Prostate gland (tissue), 2 donors: ENCODE measurements at regions of chr10 and their contacts with region 1.

Region 1: GRCh38 chr10:77641788-77642397 is 4.3 kb upstream of the KCNMA1 start:
- DNase-seq: peak; percentile 75
- H3K4me3 ChIP-seq: no peak overlapping the region
- H3K27ac ChIP-seq: no peak overlapping the region
- H3K4me1 ChIP-seq: no peaks in the 10 kb centered on the region
- H3K27me3 ChIP-seq: peaks cover 11% of the 10 kb centered on the region
- CTCF ChIP-seq: peak; percentile 90 to 95 (median 94)
- POLR2A ChIP-seq: no peak

Region 2: DNA sequence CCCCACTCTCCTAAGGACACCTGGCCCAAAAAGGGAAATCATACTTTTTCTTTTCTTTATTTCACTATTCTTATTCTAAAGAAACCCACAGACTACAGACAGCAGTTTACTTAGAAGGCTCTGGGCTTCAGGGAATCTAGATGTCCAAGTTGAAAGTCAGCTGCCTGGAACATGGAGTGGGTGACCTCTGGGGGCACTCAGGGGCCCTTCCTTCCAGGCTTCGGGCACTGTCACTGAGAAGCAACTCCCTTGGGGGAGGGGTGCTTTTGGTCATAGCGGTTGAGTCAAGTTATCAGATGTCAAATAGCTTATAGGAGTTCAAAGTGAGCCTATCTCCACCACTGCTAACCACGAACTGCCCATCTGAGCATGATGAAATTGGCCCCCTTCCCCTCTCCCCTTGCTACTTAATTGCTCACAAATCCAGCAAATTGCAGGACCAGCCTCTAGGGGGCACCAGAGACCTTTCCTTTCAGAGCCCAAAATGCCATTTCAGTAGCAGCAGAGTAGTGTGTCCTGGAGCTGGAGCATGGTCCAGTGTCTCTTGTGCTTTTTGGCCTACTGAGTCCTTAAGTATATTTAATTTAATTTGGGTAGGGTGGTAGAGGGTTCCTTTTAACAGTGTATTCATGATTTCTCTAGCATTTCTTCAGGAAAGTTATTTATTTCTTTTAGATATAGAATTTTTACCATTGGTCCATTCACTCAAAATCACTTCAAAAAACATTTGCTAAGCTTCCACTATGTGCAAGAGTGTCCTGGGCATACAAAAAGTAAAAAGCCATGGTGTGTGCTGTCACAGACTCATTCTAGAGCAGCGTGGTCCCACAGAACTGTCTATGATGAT is 468.1 kb before region 1 on chr10:
- intact Hi-C with region 1: loop called (anchors 2 kb)
- DNase-seq: peak; percentile 67
- H3K4me3 ChIP-seq: no peak overlapping the region
- H3K27ac ChIP-seq: no peak overlapping the region
- H3K4me1 ChIP-seq: no peaks in the 10 kb centered on the region
- H3K27me3 ChIP-seq: no peaks in the 10 kb centered on the region
- CTCF ChIP-seq: peak; percentile 85 to 94 (median 90)
- POLR2A ChIP-seq: no peak

Region 3: DNA sequence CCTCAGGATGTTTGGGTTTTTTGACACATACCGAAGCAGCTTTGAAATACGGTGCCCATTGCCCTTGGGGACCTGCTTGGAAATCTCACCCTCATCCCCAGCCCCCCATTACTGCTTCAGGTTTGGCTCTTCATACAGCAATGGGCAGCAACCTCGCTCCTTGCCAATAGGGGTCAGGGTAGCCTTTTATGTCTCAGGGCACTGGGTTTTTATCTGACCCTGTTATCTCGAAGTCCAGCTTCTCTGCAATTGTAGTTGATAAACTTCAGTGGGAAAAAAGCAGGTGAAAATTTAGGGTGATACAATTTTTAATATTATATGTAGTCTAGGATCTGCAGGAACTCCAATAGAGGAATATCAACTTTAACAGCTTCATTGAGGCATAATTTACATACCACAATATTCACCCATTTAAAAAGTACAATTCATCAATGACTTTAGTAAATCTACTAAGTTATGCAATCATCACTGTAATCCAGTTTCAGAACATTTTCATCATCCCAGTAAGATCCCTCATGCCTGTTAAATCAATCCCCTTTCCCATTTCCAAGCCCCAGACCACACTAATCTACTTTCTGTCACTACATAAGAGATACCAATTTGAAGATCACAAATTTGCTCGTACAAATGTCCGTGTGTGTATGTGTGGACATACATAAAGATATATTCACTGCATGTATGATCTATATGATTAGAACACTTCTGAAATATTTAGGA is 390.4 kb before region 1 on chr10:
- intact Hi-C with region 1: loop called (anchors 2 kb)
- DNase-seq: no peak
- H3K4me3 ChIP-seq: no peak overlapping the region
- H3K27ac ChIP-seq: no peak overlapping the region
- H3K4me1 ChIP-seq: no peaks in the 10 kb centered on the region
- H3K27me3 ChIP-seq: no peaks in the 10 kb centered on the region
- CTCF ChIP-seq: peak in 2 of 4 experiments; percentile 41 to 42
- POLR2A ChIP-seq: no peak

Region 4: GRCh38 chr10:77391605-77392235 is 250.2 kb before region 1 on chr10:
- intact Hi-C with region 1: loop called (anchors 5 kb)
- DNase-seq: peak; percentile 61
- H3K4me3 ChIP-seq: no peak overlapping the region
- H3K27ac ChIP-seq: peak overlapping the region; percentile 54 to 58
- H3K4me1 ChIP-seq: no peaks in the 10 kb centered on the region
- H3K27me3 ChIP-seq: no peaks in the 10 kb centered on the region
- CTCF ChIP-seq: peak; percentile 50 to 72 (median 65)
- POLR2A ChIP-seq: no peak

Region 5: DNA sequence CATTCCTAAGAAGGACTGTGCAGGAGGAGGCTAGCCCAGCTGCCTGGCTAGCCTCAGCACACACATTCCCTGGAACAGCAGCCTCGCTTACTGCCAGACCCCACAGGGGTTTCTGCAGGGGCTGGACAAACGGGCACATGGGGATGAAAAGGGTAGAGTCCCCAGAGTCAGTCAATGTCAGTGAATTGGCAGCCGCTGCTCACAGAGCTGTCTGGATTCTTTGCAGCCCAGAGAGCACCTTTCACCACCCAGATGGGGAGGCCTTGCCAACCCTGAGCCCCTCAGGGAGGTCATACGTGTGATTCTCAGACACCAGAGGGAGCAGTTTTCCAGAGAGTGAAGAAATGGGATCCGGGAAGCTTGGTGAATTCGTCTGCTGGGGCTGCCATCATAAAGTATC is 147.6 kb before region 1 on chr10:
- intact Hi-C with region 1: loop called (anchors 5 kb)
- DNase-seq: no peak
- H3K4me3 ChIP-seq: no peak overlapping the region
- H3K27ac ChIP-seq: peak overlapping the region; percentile 44 to 46
- H3K4me1 ChIP-seq: peaks cover 4% of the 10 kb centered on the region
- H3K27me3 ChIP-seq: no peaks in the 10 kb centered on the region
- CTCF ChIP-seq: peak in 3 of 4 experiments; percentile 31 to 50 (median 31)
- POLR2A ChIP-seq: no peak

Region 6: GRCh38 chr10:77592946-77593636 is 48.8 kb before region 1 on chr10:
- intact Hi-C with region 1: loop called (anchors 5 kb)
- DNase-seq: no peak
- H3K4me3 ChIP-seq: no peak overlapping the region
- H3K27ac ChIP-seq: no peak overlapping the region
- H3K4me1 ChIP-seq: no peaks in the 10 kb centered on the region
- H3K27me3 ChIP-seq: no peaks in the 10 kb centered on the region
- CTCF ChIP-seq: no peak
- POLR2A ChIP-seq: no peak